A673 (cell line): ENCODE measurements at regions of chr21 and their contacts with region 1.

Region 1: DNA sequence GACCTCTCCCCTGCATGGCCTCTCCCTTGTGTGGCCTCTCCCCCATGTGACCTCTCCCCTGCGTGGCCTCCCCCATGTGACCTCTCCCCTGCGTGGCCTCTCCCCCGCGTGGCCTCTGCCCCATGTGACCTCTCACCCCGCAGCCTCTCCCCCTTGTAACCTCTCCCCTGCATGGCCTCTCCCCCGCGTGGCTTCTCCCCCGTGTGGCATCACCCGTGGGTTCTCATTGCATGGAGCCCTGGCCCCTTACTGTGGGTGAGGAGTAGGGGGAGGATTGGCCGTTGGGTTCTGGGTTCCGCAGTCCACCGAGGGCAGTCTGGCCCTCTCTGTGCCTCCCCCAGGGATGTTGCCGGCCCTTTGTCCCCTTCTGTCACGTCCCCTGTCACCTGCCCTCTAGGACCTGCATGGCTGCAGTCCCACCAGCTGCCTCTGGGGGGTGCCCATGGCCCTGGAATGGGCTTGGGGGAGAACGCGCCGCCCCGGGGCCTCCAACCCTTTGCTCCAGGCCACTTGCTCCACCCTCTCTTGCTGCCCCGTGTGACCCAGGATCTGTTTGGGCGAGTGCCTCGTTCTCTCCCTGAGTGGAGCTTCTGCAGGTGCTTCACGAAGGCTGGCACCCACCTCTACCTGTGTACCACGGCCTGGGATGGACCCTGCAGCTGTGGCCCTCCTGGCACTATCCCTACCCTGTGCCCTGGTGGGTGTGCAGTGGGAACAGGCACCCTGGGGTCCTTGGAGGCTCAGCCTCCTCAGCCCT is 21.3 kb downstream of the RRP1 start:
- DNase-seq: peak; percentile 80
- H3K4me3 ChIP-seq: no peak overlapping the region
- H3K27ac ChIP-seq: no peak overlapping the region
- H3K4me1 ChIP-seq: peaks cover 22% of the 10 kb centered on the region
- H3K27me3 ChIP-seq: no peaks in the 10 kb centered on the region
- CTCF ChIP-seq: peak; percentile 98

Region 2: GRCh38 chr21:43842742-43843141 is 32.1 kb after region 1 on chr21:
- CTCF ChIA-PET with region 1: no interaction called
- POLR2A ChIA-PET with region 1: no interaction called
- intact Hi-C with region 1: no loop called
- DNase-seq: no peak
- H3K4me3 ChIP-seq: no peak overlapping the region
- H3K27ac ChIP-seq: no peak overlapping the region
- H3K4me1 ChIP-seq: no peaks in the 10 kb centered on the region
- H3K27me3 ChIP-seq: no peaks in the 10 kb centered on the region
- CTCF ChIP-seq: no peak

Region 3: GRCh38 chr21:43866260-43866629 is 55.6 kb after region 1 on chr21:
- CTCF ChIA-PET with region 1: no interaction called
- POLR2A ChIA-PET with region 1: no interaction called
- intact Hi-C with region 1: loop called (anchors 10 kb)
- DNase-seq: peak; percentile 71
- H3K4me3 ChIP-seq: peak overlapping the region; percentile 94
- H3K27ac ChIP-seq: peak overlapping the region; percentile 90
- H3K4me1 ChIP-seq: peaks cover 13% of the 10 kb centered on the region
- H3K27me3 ChIP-seq: no peaks in the 10 kb centered on the region
- CTCF ChIP-seq: no peak

Region 4: DNA sequence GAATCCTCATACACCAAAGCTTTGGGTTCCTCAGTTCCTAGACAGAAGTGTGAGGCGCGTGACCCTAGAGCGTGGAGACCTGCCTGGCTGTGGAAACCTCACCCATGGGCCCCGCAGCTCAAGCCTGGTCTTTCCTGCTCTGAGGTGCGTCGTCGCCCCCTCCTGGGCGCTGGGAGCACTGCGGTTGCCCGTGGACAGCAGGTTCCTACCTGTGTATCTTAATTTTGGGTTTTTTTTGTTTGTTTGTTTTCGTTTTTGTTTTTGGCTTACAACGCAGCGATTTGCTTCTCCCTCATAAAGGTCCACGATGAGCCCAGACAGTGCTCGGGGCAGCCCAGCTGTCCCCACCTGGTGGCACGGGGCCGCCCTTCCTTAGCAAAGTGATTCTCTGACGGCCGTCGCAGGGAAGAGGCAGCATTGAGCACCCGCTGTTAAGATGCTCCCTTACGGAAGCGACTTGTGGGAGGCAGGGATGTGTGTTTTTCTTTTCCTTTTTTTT is 164.9 kb after region 1 on chr21:
- CTCF ChIA-PET with region 1: interaction called, 14 read pairs
- POLR2A ChIA-PET with region 1: no interaction called
- intact Hi-C with region 1: loop called (anchors 1 kb)
- DNase-seq: peak; percentile 72
- H3K4me3 ChIP-seq: no peak overlapping the region
- H3K27ac ChIP-seq: no peak overlapping the region
- H3K4me1 ChIP-seq: no peaks in the 10 kb centered on the region
- H3K27me3 ChIP-seq: no peaks in the 10 kb centered on the region
- CTCF ChIP-seq: peak; percentile 98

Region 5: GRCh38 chr21:44299458-44300261 is 489.0 kb after region 1 on chr21 and contains the start of gene PFKL:
- CTCF ChIA-PET with region 1: interaction called, 3 read pairs
- POLR2A ChIA-PET with region 1: no interaction called
- intact Hi-C with region 1: loop called (anchors 5 kb)
- DNase-seq: peak; percentile 57
- H3K4me3 ChIP-seq: peak within 1 kb of the TSS; percentile 87
- H3K27ac ChIP-seq: peak within 1 kb of the TSS; percentile 86
- H3K4me1 ChIP-seq: peaks cover 32% of the 10 kb centered on the region
- H3K27me3 ChIP-seq: no peaks in the 10 kb centered on the region
- CTCF ChIP-seq: no peak
- total RNA-seq, gene PFKL: 112 and 122 TPM in 2 replicates